ENCODE measurements at regions of chrX and their contacts with region 1.

Region 1: GRCh38 chrX:43557792-43558191 is 98.3 kb upstream of the MAOA start:
- DNase-seq: peak; percentile 8 to 29
- ATAC-seq: peak in 1 of 8 donors; percentile 34
- H3K4me3 ChIP-seq: no peak overlapping the region
- H3K27ac ChIP-seq: no peak overlapping the region
- H3K4me1 ChIP-seq: no peaks in the 10 kb centered on the region
- H3K27me3 ChIP-seq: peaks cover 0 to 21% (median 0%) of the 10 kb centered on the region in 7 donors
- CTCF ChIP-seq: peak; percentile 35 to 74 (median 64)

Region 2: DNA sequence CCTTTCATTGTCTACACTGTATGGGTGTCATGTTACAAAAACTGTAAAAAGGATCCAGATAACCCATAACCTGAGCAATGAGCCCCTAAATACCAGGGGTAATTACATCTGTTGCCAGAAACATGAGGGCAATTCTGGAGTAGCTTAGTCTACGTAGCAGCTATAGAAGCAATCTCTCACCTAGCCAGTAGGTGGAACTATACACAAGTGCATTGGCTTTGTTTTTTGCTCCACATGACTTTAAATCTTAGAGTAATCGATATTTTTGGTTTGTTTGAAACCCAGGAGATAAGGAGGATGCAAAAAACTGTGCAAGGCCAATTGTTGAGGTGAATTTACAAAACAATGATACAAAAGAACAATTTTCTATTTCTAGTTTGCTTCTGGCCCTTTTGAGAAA is 1776.3 kb before region 1 on chrX:
- intact Hi-C with region 1: loop called in 6 of 10 experiments (anchors 5 to 10 kb)
- DNase-seq: no peak
- ATAC-seq: peak in 1 of 8 donors; percentile 64
- H3K4me3 ChIP-seq: no peak overlapping the region
- H3K27ac ChIP-seq: no peak overlapping the region
- H3K4me1 ChIP-seq: peaks cover 0 to 8% (median 0%) of the 10 kb centered on the region in 9 donors
- H3K27me3 ChIP-seq: peaks cover 0 to 22% (median 0%) of the 10 kb centered on the region in 7 donors
- CTCF ChIP-seq: peak; percentile 10 to 73 (median 59)

Region 3: DNA sequence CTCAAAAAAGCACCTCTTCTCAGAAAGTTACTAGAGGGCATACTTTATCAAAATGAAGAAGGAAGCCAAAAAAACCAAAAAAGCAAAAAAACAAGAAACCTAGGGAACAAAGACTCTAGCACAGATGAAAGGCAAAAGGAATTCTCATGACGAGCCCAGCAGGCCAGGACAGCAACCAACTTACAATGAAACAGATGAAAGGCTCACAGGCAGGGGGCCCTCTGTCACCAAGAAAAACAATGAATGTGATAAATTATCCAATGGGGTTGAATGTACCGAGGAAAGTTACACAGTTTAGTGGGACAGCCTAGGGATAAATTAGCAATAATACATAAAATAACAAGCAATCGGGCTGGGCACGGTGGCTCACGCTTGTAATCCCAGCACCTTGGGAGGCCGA is 1754.8 kb before region 1 on chrX:
- intact Hi-C with region 1: loop called in 7 of 10 experiments (anchors 5 to 10 kb)
- DNase-seq: no peak
- ATAC-seq: no peak
- H3K4me3 ChIP-seq: no peak overlapping the region
- H3K27ac ChIP-seq: no peak overlapping the region
- H3K4me1 ChIP-seq: peaks cover 0 to 5% (median 0%) of the 10 kb centered on the region in 9 donors
- H3K27me3 ChIP-seq: peaks cover 0 to 30% (median 0%) of the 10 kb centered on the region in 7 donors
- CTCF ChIP-seq: peak in 2 of 9 donors; percentile 16 to 29

Region 4: GRCh38 chrX:43505754-43506153 is 52.0 kb before region 1 on chrX:
- intact Hi-C with region 1: no loop called
- DNase-seq: no peak
- ATAC-seq: no peak
- H3K4me3 ChIP-seq: no peak overlapping the region
- H3K27ac ChIP-seq: no peak overlapping the region
- H3K4me1 ChIP-seq: no peaks in the 10 kb centered on the region
- H3K27me3 ChIP-seq: peaks cover 0 to 36% (median 0%) of the 10 kb centered on the region in 7 donors
- CTCF ChIP-seq: no peak

Region 5: DNA sequence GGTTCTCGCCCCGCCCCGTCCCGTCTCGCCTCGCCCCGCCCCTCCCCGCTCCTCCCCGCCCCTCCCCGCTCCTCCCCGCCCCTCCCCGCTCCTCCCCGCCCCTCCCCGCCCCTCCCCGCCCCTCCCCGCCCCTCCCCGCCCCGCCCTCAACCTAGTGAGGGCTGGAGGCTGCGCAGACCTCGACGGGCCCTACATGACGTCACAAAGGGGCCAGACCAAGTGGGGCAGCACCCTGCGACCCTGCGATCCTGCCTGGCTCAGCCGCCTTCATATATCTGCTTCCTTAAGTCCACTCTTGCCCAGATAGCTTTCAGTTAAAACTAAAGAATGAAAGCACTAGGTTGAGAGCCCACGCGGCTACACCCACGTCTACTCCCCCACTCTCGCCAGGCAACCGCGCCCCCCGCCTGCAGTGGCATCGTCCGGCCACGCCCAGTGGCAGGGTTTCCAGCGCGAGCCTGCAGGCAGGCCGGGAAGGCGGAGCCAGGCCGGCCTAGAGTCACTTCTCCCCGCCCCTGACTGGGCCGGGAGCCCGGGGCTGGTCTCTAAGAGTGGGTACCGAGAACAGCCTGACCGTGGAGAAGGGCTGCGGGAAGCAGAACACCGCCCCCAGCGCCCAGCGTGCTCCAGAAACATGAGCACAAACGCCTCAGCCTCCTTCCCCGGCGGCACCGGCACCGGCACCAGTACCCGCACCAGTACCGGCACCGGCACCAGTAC is 96.8 kb after region 1 on chrX:
- intact Hi-C with region 1: loop called in 2 of 10 experiments (anchors 10 kb)
- DNase-seq: peak; percentile 91 to 92
- ATAC-seq: peak; percentile 97 to 99 (median 98)
- H3K4me3 ChIP-seq: peak overlapping the region; percentile 60 to 88 (median 72)
- H3K27ac ChIP-seq: peak overlapping the region; percentile 75 to 94 (median 91)
- H3K4me1 ChIP-seq: peaks cover 0 to 12% (median 0%) of the 10 kb centered on the region in 9 donors
- H3K27me3 ChIP-seq: peaks cover 0 to 15% (median 0%) of the 10 kb centered on the region in 7 donors
- CTCF ChIP-seq: peak in 8 of 9 donors; percentile 7 to 58 (median 30)

Region 6: GRCh38 chrX:43939187-43939926 is 381.6 kb after region 1 on chrX:
- intact Hi-C with region 1: loop called in 1 of 10 experiments (anchors 10 kb)
- DNase-seq: no peak
- ATAC-seq: peak in 2 of 8 donors; percentile 44 to 48
- H3K4me3 ChIP-seq: no peak overlapping the region
- H3K27ac ChIP-seq: no peak overlapping the region
- H3K4me1 ChIP-seq: no peaks in the 10 kb centered on the region
- H3K27me3 ChIP-seq: peaks cover 0 to 73% (median 0%) of the 10 kb centered on the region in 7 donors
- CTCF ChIP-seq: peak in 6 of 9 donors; percentile 18 to 54 (median 48)